WTC11 (cell line): ENCODE measurements at regions of chr1 and their contacts with region 1.

Region 1: GRCh38 chr1:242017584-242018233 is 18.8 kb upstream of the MAP1LC3C start:
- DNase-seq: peak; percentile 50
- ATAC-seq: peak; percentile 70
- H3K4me3 Mint-ChIP-seq: no peak overlapping the region
- H3K27ac Mint-ChIP-seq: no peak overlapping the region
- H3K4me1 Mint-ChIP-seq: peaks cover 8% of the 10 kb centered on the region
- H3K27me3 Mint-ChIP-seq: no peaks in the 10 kb centered on the region
- CTCF ChIP-seq: peak; percentile 56

Region 2: DNA sequence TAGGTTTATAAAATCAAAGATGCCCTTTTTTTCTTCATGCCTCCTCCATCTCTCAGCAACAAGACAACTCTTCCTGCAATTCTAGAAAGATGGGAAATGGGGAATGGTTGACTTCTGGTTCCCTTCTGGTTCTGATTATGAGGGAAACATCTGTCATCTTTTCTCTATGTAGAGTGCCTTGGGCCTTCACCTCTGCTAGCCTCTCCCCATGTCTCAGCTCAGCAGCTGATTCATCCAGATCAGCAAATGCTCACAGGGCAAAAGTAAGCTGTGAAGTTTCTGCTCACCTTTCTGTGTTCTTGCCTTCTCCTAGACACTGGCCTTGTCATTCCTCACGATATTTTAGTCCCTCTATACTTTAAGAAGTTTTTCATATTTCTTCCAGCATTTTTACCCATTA is 77.9 kb before region 1 on chr1:
- CTCF ChIA-PET with region 1: no interaction called
- POLR2A ChIA-PET with region 1: no interaction called
- DNase-seq: no peak
- ATAC-seq: no peak
- H3K4me3 Mint-ChIP-seq: no peak overlapping the region
- H3K27ac Mint-ChIP-seq: no peak overlapping the region
- H3K4me1 Mint-ChIP-seq: peaks cover 6% of the 10 kb centered on the region
- H3K27me3 Mint-ChIP-seq: no peaks in the 10 kb centered on the region
- CTCF ChIP-seq: no peak

Region 3: DNA sequence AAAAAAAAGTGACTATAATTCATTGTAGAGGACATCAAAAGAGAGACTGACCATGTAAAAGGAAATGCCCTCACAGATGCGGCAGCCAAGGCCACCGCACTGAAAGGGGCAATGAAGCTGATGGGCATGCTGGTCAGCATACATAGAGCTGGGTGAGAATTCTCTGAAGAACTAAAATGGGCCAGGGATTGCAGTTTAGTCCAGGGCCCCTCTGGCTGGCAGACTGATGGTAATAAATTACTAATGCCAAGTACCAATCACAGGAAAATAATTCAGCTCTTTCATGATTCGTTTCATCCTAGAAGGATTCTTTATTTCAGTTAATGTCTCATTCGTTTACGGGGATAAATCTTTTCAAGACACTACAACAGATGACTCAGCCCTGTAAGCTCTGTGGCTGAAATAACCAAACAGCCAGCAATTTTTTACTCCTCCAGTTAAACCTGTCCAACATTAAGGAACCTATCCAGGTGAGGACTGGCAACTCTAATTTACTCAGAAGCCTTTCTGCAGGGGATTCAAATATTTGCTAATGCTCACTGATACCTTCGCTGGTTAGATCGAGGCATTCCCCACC is 38.1 kb after region 1 on chr1:
- CTCF ChIA-PET with region 1: no interaction called
- POLR2A ChIA-PET with region 1: no interaction called
- DNase-seq: no peak
- ATAC-seq: no peak
- H3K4me3 Mint-ChIP-seq: no peak overlapping the region
- H3K27ac Mint-ChIP-seq: no peak overlapping the region
- H3K4me1 Mint-ChIP-seq: peaks cover 59% of the 10 kb centered on the region
- H3K27me3 Mint-ChIP-seq: no peaks in the 10 kb centered on the region
- CTCF ChIP-seq: no peak

Region 4: GRCh38 chr1:242128951-242129502 is 111.3 kb after region 1 on chr1:
- CTCF ChIA-PET with region 1: interaction called, 16 read pairs
- POLR2A ChIA-PET with region 1: no interaction called
- DNase-seq: no peak
- ATAC-seq: peak; percentile 98
- H3K4me3 Mint-ChIP-seq: no peak overlapping the region
- H3K27ac Mint-ChIP-seq: no peak overlapping the region
- H3K4me1 Mint-ChIP-seq: peaks cover 3% of the 10 kb centered on the region
- H3K27me3 Mint-ChIP-seq: no peaks in the 10 kb centered on the region
- CTCF ChIP-seq: no peak